A549 (cell line): ENCODE measurements at regions of chr16 and their contacts with region 1.

Region 1: GRCh38 chr16:1705688-1706385 is at the start of gene MAPK8IP3:
- DNase-seq: peak; percentile 91
- ATAC-seq: peak; percentile 88
- H3K4me3 ChIP-seq: peak within 1 kb of the TSS; percentile 89
- H3K27ac ChIP-seq: peak within 1 kb of the TSS; percentile 93 to 96
- H3K4me1 ChIP-seq: peaks cover 14% of the 10 kb centered on the region; the same call in 1 of the 3 replicates
- CTCF ChIP-seq: peak; percentile 93
- EP300 ChIP-seq: no peak
- POLR2A ChIP-seq: peak; percentile 94
- RAD21 ChIP-seq: peak; percentile 21 to 64; a peak in 3 of 5 replicates
- polyA plus RNA-seq, gene MAPK8IP3: 12.0 and 13.4 TPM in 2 replicates

Region 2: DNA sequence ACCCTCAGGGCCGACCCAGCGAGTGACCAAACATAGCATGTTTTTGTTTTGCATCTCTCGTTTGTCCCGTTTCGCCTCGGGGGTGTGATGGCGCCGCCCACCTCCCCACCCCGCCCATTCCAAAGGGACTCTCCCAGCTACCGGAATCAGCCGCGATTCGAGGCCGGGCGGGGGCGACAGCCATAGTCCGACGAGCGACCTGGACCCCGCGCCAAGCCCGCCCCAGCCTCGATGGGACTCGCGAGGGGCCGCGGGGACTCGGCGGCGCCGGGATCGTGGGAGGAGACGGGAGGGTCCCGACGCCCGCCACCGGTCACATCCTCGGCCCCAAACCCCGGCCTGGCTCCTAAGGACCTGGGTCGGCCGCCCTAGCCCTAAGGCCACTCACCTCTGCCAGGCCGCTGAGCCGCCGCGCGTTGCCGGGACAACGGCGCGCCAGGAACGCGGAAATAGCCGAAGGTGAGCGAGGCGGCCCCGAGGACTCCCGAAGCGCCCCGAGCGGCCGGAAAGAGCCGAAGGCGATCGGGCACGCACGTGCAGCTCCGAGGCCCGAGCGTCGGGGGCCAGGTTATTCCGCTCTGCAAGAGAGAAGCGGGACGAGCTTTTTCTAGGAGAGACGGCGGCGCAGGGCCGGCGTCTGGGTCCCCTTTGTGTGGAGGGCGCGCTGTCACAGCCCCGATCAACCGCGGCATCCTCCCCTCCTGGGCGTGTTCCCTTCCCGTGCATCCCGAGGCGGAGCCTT is 95.4 kb before region 1 on chr16:
- CTCF ChIA-PET with region 1: interaction called, 26 read pairs
- POLR2A ChIA-PET with region 1: interaction called, 14 read pairs
- DNase-seq: peak; percentile 81 to 92
- ATAC-seq: peak; percentile 68 to 86
- H3K4me3 ChIP-seq: peak overlapping the region; percentile 63
- H3K27ac ChIP-seq: peak overlapping the region; percentile 77 to 92
- H3K4me1 ChIP-seq: peaks cover 14% of the 10 kb centered on the region; the same call in 2 of the 3 replicates
- CTCF ChIP-seq: 0 out of 3 replicates have a peak, but pooled peaks have one; percentile 8
- EP300 ChIP-seq: no peak
- POLR2A ChIP-seq: peak; percentile 29
- RAD21 ChIP-seq: 0 out of 5 replicates have a peak, but pooled peaks of 1 of the 2 experiments have one; percentile 18

Region 3: DNA sequence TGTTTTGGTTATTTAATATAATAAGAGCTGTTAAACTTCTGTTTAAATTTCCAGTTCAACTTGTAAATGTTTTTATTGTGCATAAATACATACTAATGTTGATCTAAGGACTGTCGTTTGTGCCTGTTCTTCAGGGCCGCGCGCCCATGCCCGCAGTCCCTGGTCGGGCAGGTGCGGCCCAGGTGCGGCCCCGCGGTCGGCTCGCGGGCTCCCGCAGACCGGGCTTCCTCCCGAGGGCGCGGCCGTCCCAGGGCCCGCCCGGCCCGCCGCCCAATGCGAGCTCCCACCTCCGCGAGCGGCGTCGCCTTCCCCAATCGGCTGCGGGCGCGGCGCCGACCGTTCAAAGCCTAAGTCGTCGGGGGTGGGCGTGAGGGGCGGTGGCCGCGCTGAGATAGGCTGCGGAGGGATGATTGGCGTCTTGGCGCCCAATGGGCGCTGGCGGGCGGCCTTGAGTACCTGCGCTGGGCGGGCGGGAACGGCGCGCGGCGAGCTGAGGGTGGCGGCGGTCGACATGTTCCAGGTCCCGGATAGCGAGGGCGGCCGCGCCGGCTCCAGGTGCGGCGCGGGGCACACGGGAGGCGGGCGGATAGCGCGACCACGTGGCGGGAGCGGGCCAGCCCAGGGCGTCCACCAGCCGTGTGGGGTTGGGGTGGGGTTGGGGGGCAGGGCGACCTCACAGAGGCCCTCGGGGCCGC is 27.9 kb before region 1 on chr16 and contains the start of gene JPT2:
- CTCF ChIA-PET with region 1: interaction called, 63 read pairs
- POLR2A ChIA-PET with region 1: interaction called, 34 read pairs
- DNase-seq: peak; percentile 95 to 99
- ATAC-seq: peak; percentile 95 to 96
- H3K4me3 ChIP-seq: peak within 1 kb of the TSS; percentile 85
- H3K27ac ChIP-seq: peak within 1 kb of the TSS; percentile 97 to 98
- H3K4me1 ChIP-seq: peaks cover 37% of the 10 kb centered on the region
- CTCF ChIP-seq: no peak
- EP300 ChIP-seq: no peak
- POLR2A ChIP-seq: peak; percentile 43
- RAD21 ChIP-seq: peak in 1 of 2 experiments; percentile 14; a peak in 1 of 5 replicates
- polyA plus RNA-seq, gene JPT2: 91.6 and 97.6 TPM in 2 replicates

Region 4: GRCh38 chr16:1734123-1734832 is 28.4 kb after region 1 on chr16:
- CTCF ChIA-PET with region 1: interaction called, 34 read pairs
- POLR2A ChIA-PET with region 1: no interaction called
- DNase-seq: no peak
- ATAC-seq: no peak
- H3K4me3 ChIP-seq: no peak overlapping the region
- H3K27ac ChIP-seq: no peak overlapping the region
- H3K4me1 ChIP-seq: no peaks in the 10 kb centered on the region
- CTCF ChIP-seq: no peak
- EP300 ChIP-seq: no peak
- POLR2A ChIP-seq: no peak
- RAD21 ChIP-seq: no peak

Region 5: GRCh38 chr16:1772736-1773584 is 67.1 kb after region 1 on chr16 and contains the starts of genes EME2 and MRPS34:
- CTCF ChIA-PET with region 1: interaction called, 56 read pairs
- POLR2A ChIA-PET with region 1: interaction called, 9 read pairs
- DNase-seq: peak; percentile 70 to 93
- ATAC-seq: peak; percentile 52 to 70
- H3K4me3 ChIP-seq: peak within 1 kb of the TSS; percentile 85
- H3K27ac ChIP-seq: peak within 1 kb of the TSS; percentile 95 to 98
- H3K4me1 ChIP-seq: peaks cover 21% of the 10 kb centered on the region
- CTCF ChIP-seq: peak; percentile 83
- EP300 ChIP-seq: no peak
- POLR2A ChIP-seq: peak; percentile 88
- RAD21 ChIP-seq: peak; percentile 42 to 63; a peak in 4 of 5 replicates
- polyA plus RNA-seq, gene EME2: 2.9 and 3.7 TPM in 2 replicates
- polyA plus RNA-seq, gene MRPS34: 105 and 118 TPM in 2 replicates